Activated CD4-positive, alpha-beta T cell treated with anti-CD3 and anti-CD28 coated beads for 36 hours (primary cell): ENCODE measurements at regions of chr9 and their contacts with region 1.

Region 1: GRCh38 chr9:34701769-34702736 is 7.9 kb downstream of the CCL21 start:
- DNase-seq: peak; percentile 91
- ATAC-seq: peak; percentile 85
- H3K4me3 Mint-ChIP-seq: peak overlapping the region; percentile 72
- H3K27ac Mint-ChIP-seq: peak overlapping the region; percentile 58
- H3K4me1 Mint-ChIP-seq: peaks cover 7% of the 10 kb centered on the region
- H3K27me3 Mint-ChIP-seq: peaks cover 8% of the 10 kb centered on the region

Region 2: GRCh38 chr9:34637356-34638137 is 64.5 kb before region 1 on chr9 and contains the start of gene SIGMAR1:
- CTCF ChIA-PET with region 1: interaction called, 19 read pairs
- POLR2A ChIA-PET with region 1: no interaction called
- intact Hi-C with region 1: no loop called
- DNase-seq: peak; percentile 96
- ATAC-seq: peak; percentile 94
- H3K4me3 Mint-ChIP-seq: peak within 1 kb of the TSS; percentile 84
- H3K27ac Mint-ChIP-seq: peak within 1 kb of the TSS; percentile 92
- H3K4me1 Mint-ChIP-seq: peaks cover 40% of the 10 kb centered on the region
- H3K27me3 Mint-ChIP-seq: no peaks in the 10 kb centered on the region
- total RNA-seq, gene SIGMAR1: 63.6 to 68.0 TPM

Region 3: DNA sequence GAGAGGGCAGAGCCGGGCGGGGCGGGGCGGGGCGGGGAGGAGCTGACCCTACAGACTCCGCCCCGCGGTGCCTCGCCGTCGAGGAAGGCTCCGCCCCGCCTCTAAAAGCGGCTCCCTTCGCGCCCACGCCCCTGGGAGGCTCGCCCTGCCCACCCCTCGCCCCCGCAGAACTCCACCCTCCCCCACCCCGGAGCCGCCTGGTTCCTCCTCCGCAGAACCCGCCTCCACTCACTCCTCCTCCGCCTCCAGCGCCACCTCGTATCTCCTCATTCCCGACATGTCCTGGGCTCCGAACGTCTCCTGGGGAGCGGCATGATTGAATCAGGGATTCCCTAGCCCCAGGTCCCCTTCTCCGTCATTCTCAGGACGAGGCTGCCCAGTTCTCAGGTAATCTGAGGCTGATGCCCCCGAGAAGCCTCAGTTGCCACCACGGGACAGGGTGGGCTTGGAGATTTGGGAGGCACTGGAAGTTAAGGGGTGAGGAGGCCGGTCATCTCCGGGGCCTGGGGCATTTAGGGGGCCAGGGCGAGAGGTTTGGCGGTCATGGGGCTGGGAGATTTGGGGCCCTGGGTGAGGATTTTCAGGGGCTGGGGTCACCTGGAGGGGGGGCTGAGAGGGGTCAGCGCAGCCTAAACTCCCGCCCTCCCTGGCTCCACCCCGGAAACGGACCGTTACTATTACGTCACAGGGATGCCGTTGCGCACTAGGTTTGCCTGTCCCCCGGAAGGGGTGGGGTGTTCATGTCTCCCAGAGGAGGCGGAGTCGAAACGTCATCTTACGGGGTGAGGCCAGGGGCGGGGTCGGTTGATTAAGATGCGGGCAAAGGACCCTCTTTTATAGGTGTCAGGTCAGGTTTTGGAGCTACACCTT is 36.4 kb before region 1 on chr9:
- CTCF ChIA-PET with region 1: interaction called, 11 read pairs
- POLR2A ChIA-PET with region 1: no interaction called
- intact Hi-C with region 1: loop called in 1 of 2 experiments (anchors 1 kb)
- DNase-seq: peak; percentile 93
- ATAC-seq: peak; percentile 75
- H3K4me3 Mint-ChIP-seq: peak overlapping the region; percentile 77
- H3K27ac Mint-ChIP-seq: peak overlapping the region; percentile 87
- H3K4me1 Mint-ChIP-seq: peaks cover 33% of the 10 kb centered on the region
- H3K27me3 Mint-ChIP-seq: no peaks in the 10 kb centered on the region

Region 4: DNA sequence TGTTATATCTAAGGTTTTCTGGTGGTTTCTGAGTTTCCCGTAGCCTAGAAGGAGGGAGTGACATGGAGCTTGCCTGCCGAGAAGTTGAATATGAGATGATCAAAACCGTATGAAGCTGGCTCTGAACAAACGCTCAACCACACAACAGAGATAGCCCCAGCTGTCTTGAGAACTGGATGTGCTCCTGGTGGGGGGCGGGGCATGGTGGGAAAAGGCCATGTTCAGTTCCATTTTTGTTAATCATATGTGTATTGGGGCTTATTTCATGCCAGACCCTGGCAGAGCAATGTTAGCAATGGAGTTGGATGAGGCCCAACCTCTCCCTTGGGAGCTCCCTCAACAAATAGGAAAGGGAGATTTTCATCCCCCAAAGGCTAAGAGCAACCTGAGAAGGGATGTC is 15.8 kb before region 1 on chr9:
- CTCF ChIA-PET with region 1: interaction called, 26 read pairs
- POLR2A ChIA-PET with region 1: no interaction called
- intact Hi-C with region 1: loop called in 1 of 2 experiments (anchors 1 kb)
- DNase-seq: no peak
- ATAC-seq: no peak
- H3K4me3 Mint-ChIP-seq: no peak overlapping the region
- H3K27ac Mint-ChIP-seq: no peak overlapping the region
- H3K4me1 Mint-ChIP-seq: peaks cover 9% of the 10 kb centered on the region
- H3K27me3 Mint-ChIP-seq: no peaks in the 10 kb centered on the region

Region 5: GRCh38 chr9:34715639-34716215 is 13.7 kb after region 1 on chr9:
- CTCF ChIA-PET with region 1: interaction called, 14 read pairs
- POLR2A ChIA-PET with region 1: interaction called, 3 read pairs
- intact Hi-C with region 1: no loop called
- DNase-seq: no peak
- ATAC-seq: no peak
- H3K4me3 Mint-ChIP-seq: no peak overlapping the region
- H3K27ac Mint-ChIP-seq: no peak overlapping the region
- H3K4me1 Mint-ChIP-seq: no peaks in the 10 kb centered on the region
- H3K27me3 Mint-ChIP-seq: peaks cover 10% of the 10 kb centered on the region

Region 6: GRCh38 chr9:35172878-35173277 is 470.8 kb after region 1 on chr9:
- CTCF ChIA-PET with region 1: no interaction called
- POLR2A ChIA-PET with region 1: no interaction called
- intact Hi-C with region 1: no loop called
- DNase-seq: no peak
- ATAC-seq: no peak
- H3K4me3 Mint-ChIP-seq: no peak overlapping the region
- H3K27ac Mint-ChIP-seq: no peak overlapping the region
- H3K4me1 Mint-ChIP-seq: no peaks in the 10 kb centered on the region
- H3K27me3 Mint-ChIP-seq: peaks cover 9% of the 10 kb centered on the region